SK-N-SH (cell line): ENCODE measurements at regions of chr1 and their contacts with region 1.

Region 1: GRCh38 chr1:15994590-15995351 is 9.3 kb upstream of the SRARP start:
- DNase-seq: peak; percentile 86
- H3K4me3 ChIP-seq: no peak overlapping the region
- H3K27ac ChIP-seq: no peak overlapping the region
- H3K4me1 ChIP-seq: no peaks in the 10 kb centered on the region
- H3K27me3 ChIP-seq: no peaks in the 10 kb centered on the region
- CTCF ChIP-seq: peak; percentile 85
- EP300 ChIP-seq: no peak
- RAD21 ChIP-seq: peak; percentile 91

Region 2: GRCh38 chr1:15796086-15796462 is 198.7 kb before region 1 on chr1:
- CTCF ChIA-PET with region 1: interaction called, 58 read pairs
- POLR2A ChIA-PET with region 1: no interaction called
- DNase-seq: no peak
- H3K4me3 ChIP-seq: no peak overlapping the region
- H3K27ac ChIP-seq: peak overlapping the region; percentile 20 to 97; a peak in 3 of 4 replicates
- H3K4me1 ChIP-seq: peaks cover 20 to 45% of the 10 kb centered on the region in 2 experiments; a peak in 3 of 4 replicates
- H3K27me3 ChIP-seq: no peaks in the 10 kb centered on the region
- CTCF ChIP-seq: no peak
- EP300 ChIP-seq: no peak
- RAD21 ChIP-seq: no peak

Region 3: DNA sequence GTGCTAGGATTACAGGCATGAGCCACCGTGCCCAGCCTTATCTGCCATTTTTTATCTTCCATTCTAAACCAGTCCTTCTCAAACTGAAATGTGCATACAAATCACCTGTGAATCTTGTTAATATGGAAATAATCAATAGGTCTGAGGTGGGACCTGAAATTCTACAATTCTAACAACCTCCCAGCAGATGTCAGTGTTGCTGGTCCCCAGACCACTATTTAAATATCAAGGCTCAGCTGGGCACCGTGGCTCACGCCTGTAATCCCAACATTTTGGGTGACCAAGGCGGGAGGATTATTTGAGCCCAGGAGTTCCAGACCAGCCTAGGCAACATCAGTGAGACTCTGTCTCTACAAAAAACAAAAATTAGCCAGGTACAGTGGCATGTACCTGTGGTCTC is 191.4 kb before region 1 on chr1:
- CTCF ChIA-PET with region 1: interaction called, 58 read pairs
- POLR2A ChIA-PET with region 1: no interaction called
- DNase-seq: peak; percentile 45
- H3K4me3 ChIP-seq: no peak overlapping the region
- H3K27ac ChIP-seq: no peak overlapping the region
- H3K4me1 ChIP-seq: peaks cover 19 to 29% of the 10 kb centered on the region in 2 experiments; a peak in 3 of 4 replicates
- H3K27me3 ChIP-seq: no peaks in the 10 kb centered on the region
- CTCF ChIP-seq: peak; percentile 58
- EP300 ChIP-seq: no peak
- RAD21 ChIP-seq: peak; percentile 65

Region 4: DNA sequence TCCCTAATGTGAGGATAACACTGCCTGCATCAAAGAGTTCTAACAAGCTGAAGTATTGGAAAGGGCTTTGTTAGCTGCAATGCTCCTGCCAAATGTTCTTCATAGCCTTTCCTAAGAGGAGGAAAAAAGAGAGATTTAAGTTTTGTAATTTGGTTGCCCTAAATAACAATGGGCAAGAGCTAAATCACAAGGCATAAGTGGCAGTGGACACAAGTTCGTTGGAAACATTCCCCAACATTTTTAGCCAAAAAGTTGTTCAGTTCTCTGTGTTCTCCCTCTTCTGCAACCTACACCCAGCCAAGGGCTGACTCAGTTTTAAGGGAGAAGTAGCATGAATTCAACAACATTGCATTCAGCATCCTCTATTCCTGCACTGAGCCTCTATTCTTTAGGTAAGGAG is 184.7 kb before region 1 on chr1:
- CTCF ChIA-PET with region 1: interaction called, 58 read pairs
- POLR2A ChIA-PET with region 1: no interaction called
- DNase-seq: no peak
- H3K4me3 ChIP-seq: no peak overlapping the region
- H3K27ac ChIP-seq: no peak overlapping the region
- H3K4me1 ChIP-seq: no peaks in the 10 kb centered on the region
- H3K27me3 ChIP-seq: no peaks in the 10 kb centered on the region
- CTCF ChIP-seq: no peak
- EP300 ChIP-seq: no peak
- RAD21 ChIP-seq: no peak

Region 5: DNA sequence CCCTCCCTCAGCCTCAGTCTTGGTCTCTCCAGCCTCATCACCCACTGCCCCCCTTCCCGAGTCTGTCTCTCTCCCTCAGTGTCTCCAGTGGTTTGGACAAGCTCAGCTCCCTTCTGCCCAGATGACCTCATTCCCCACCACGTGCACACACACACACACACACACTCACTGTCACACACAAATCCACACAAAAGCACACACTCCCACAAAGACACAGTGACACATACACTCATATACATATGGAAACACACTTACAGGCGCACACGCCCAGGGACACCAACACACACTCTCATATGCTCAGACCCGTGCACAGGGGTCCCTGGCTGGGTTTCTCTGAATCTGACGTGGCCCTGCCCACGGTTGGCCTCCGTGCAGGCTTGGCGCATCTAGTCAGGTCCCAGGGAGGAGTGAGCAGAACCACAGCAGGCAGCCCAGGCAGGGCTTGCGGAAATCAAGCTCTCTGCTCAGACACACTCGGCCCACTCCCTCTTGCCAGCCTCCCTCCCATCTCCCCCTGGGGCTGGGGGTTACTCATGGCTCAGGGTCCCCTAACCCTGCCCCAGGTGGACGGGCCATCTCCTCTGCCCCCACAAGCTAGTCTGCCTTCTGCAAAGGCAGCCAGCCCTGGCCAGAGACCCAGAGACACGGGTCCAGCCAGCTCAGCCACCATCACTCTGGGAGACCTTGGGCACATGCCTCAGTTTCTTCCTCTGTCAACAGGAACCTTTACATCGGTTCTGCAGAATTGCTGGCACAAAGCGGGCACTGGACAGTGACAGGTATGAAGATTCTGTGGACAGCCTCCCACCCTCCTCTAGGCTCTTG is 117.2 kb after region 1 on chr1:
- CTCF ChIA-PET with region 1: no interaction called
- POLR2A ChIA-PET with region 1: no interaction called
- DNase-seq: no peak
- H3K4me3 ChIP-seq: no peak overlapping the region
- H3K27ac ChIP-seq: peak overlapping the region in 1 of 2 experiments; percentile 42; a peak in 1 of 4 replicates
- H3K4me1 ChIP-seq: peaks cover 17 to 24% of the 10 kb centered on the region in 2 experiments; a peak in 3 of 4 replicates
- H3K27me3 ChIP-seq: no peaks in the 10 kb centered on the region
- CTCF ChIP-seq: no peak
- EP300 ChIP-seq: no peak
- RAD21 ChIP-seq: no peak